Activated naive CD4-positive, alpha-beta T cell treated with anti-CD3 and anti-CD28 coated beads for 36 hours (primary cell): ENCODE measurements at regions of chr18 and their contacts with region 1.

Region 1: DNA sequence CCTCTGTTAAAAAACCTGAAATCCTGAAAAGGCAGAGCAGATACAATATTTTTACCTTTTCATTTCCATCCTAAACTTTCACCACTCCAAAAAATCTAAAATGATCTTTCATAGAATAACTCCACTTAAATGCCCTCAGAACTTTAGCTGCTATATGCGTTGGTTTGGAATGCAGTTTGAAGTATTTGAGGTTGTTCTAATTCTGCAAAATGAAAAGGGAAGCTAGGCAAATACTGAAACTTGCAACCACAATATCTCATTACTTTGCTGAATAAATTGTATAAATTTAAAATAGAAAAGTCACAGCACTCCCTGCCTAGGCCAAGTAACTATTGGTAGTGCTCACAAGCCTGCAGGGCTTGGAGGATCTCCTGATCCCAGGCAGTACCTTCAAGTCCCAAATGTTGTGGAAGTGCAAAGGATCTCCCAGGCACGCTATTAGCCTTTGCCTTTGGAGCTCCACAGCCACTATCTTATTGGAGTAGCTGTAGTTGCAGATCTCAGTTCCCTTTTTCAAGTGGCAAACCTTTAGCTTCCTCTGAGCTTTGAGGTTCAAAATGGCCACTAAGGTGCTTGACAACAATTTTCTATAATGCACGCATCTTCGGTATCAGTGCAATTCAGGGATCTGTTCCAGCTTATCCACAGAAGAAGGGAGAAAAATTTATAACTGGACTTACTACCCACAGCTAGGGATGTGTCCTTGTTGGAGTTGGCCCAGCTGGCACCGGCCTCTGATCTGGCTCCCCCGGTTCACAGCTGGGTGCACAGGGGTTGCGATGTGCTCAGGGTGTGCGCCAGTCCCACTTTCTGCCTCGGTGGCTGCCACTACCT is 43.4 kb upstream of the ANKRD62 start:
- DNase-seq: no peak
- H3K4me3 Mint-ChIP-seq: no peak overlapping the region
- H3K27ac Mint-ChIP-seq: no peak overlapping the region
- H3K4me1 Mint-ChIP-seq: peaks cover 6% of the 10 kb centered on the region
- H3K27me3 Mint-ChIP-seq: no peaks in the 10 kb centered on the region

Region 2: GRCh38 chr18:10833656-10834055 is 1216.5 kb before region 1 on chr18:
- CTCF ChIA-PET with region 1: no interaction called
- intact Hi-C with region 1: no loop called
- DNase-seq: no peak
- H3K4me3 Mint-ChIP-seq: no peak overlapping the region
- H3K27ac Mint-ChIP-seq: no peak overlapping the region
- H3K4me1 Mint-ChIP-seq: no peaks in the 10 kb centered on the region
- H3K27me3 Mint-ChIP-seq: peaks cover 6% of the 10 kb centered on the region

Region 3: GRCh38 chr18:12031846-12032245 is 18.3 kb before region 1 on chr18:
- CTCF ChIA-PET with region 1: no interaction called
- intact Hi-C with region 1: no loop called
- DNase-seq: no peak
- H3K4me3 Mint-ChIP-seq: no peak overlapping the region
- H3K27ac Mint-ChIP-seq: no peak overlapping the region
- H3K4me1 Mint-ChIP-seq: no peaks in the 10 kb centered on the region
- H3K27me3 Mint-ChIP-seq: peaks cover 2% of the 10 kb centered on the region

Region 4: DNA sequence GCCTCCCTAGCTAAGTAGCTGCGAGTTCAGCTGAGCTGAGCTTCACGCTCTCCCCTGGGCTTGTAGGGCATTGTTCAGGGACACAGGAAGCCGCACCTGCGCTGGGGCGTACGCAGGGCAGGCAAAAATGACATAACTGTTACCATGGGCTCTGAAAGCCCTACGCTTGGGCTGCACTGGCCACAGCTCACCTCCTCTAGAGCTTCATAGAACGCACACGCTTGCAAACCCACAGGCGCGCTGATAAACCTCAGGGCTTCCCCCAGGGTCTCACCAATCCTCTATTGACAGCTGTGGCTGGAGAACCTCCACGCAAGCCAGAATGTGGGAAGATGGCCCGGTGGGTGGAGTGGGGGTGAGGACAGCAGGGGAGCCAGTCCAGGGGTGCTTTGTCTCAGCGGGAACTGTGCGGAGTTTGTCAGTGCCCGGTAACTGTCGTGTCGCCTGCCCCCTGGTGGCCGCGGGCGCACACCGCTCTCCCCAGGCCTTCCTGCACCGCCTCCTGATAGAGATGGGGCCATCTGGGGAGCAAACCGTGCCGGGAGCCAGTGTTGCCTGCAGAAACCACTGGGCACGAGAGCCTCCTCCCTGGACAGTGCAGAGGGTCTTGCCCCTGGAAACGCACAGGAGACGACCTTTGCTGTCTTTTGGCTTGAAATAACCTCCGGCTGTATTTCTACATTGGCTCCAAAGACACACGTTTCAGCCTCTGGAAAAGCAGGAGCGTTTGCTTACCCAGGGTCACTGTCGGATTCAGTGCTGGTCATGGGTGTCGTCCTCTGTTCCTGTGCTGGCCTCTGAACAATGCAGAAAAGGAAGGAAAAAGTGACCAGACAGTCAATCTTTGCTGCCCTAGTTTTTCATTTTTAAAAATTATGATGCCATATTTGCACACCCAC is 187.0 kb after region 1 on chr18:
- CTCF ChIA-PET with region 1: no interaction called
- intact Hi-C with region 1: loop called (anchors 10 kb)
- DNase-seq: peak; percentile 78
- H3K4me3 Mint-ChIP-seq: no peak overlapping the region
- H3K27ac Mint-ChIP-seq: no peak overlapping the region
- H3K4me1 Mint-ChIP-seq: no peaks in the 10 kb centered on the region
- H3K27me3 Mint-ChIP-seq: peaks cover 13% of the 10 kb centered on the region